Breast epithelium (tissue), 4 donors: ENCODE measurements at regions of chr2 and their contacts with region 1.

Region 1: GRCh38 chr2:68115965-68116364 is 41.7 kb upstream of the PNO1 start:
- DNase-seq: no peak
- H3K4me3 ChIP-seq: no peak overlapping the region
- H3K27ac ChIP-seq: no peak overlapping the region
- H3K4me1 ChIP-seq: no peaks in the 10 kb centered on the region
- H3K27me3 ChIP-seq: no peaks in the 10 kb centered on the region
- CTCF ChIP-seq: no peak
- POLR2A ChIP-seq: no peak

Region 2: GRCh38 chr2:66275984-66276383 is 1840.0 kb before region 1 on chr2:
- intact Hi-C with region 1: loop called (anchors 5 kb)
- DNase-seq: no peak
- H3K4me3 ChIP-seq: no peak overlapping the region
- H3K27ac ChIP-seq: no peak overlapping the region
- H3K4me1 ChIP-seq: no peaks in the 10 kb centered on the region
- H3K27me3 ChIP-seq: no peaks in the 10 kb centered on the region
- CTCF ChIP-seq: no peak
- POLR2A ChIP-seq: no peak

Region 3: DNA sequence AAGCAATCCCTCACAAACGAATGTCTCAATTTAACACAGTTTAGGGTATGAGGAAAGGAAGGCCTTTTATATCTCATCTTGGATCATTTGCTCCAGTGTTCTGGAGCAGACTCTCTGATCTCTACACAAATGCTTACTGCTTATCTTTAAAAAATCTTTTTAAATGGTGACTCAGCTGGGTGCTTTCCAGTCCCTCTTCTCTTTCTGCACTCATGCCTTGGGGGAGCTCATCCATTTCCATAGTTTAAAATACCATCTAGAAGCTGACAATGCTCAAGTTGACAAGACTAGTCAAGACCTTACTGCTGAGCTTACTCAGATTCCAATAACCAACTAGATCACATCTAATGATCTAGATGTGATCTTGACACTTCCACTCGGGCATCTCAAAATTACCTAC is 662.6 kb before region 1 on chr2:
- intact Hi-C with region 1: no loop called
- DNase-seq: no peak
- H3K4me3 ChIP-seq: no peak overlapping the region
- H3K27ac ChIP-seq: no peak overlapping the region
- H3K4me1 ChIP-seq: no peaks in the 10 kb centered on the region
- H3K27me3 ChIP-seq: no peaks in the 10 kb centered on the region
- CTCF ChIP-seq: no peak
- POLR2A ChIP-seq: no peak